Vagina (tissue), 2 donors: ENCODE measurements at regions of chr14 and their contacts with region 1.

Region 1: GRCh38 chr14:74368846-74369245 is 20.6 kb downstream of the VRTN start:
- DNase-seq: no peak
- H3K4me3 ChIP-seq: no peak overlapping the region
- H3K27ac ChIP-seq: no peak overlapping the region
- H3K4me1 ChIP-seq: no peaks in the 10 kb centered on the region
- H3K27me3 ChIP-seq: no peaks in the 10 kb centered on the region
- CTCF ChIP-seq: no peak
- POLR2A ChIP-seq: no peak

Region 2: DNA sequence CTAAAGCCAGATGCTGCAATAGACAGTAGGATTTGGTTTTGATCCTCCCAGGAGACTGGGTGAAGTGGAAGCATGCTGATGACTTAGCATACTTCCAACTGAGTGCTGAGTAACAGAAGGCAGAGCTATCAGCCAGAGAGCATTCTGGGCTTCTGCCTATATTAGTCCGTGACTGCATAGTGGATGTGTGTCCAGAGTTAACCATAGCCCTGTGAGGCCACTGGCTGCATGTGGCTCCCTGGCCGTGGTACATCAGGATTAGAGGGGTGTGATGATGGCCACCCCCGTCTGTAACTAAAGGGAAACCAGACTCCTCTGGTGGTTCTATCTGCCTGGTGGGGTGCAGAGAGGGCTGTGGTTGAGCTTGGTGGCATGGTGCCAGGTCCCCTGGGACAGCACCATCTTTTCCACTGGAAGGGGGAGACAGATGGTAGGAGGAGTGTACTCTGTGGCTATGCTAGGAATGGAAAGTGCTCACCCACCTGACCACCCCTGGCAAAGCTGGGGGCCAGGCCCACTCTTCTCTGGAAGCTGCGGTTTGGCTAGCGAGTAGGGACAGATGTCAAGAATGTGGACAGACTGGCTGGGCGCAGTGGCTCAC is 93.5 kb before region 1 on chr14:
- intact Hi-C with region 1: no loop called
- DNase-seq: no peak
- H3K4me3 ChIP-seq: no peak overlapping the region
- H3K27ac ChIP-seq: no peak overlapping the region
- H3K4me1 ChIP-seq: no peaks in the 10 kb centered on the region
- H3K27me3 ChIP-seq: no peaks in the 10 kb centered on the region
- CTCF ChIP-seq: no peak
- POLR2A ChIP-seq: no peak

Region 3: DNA sequence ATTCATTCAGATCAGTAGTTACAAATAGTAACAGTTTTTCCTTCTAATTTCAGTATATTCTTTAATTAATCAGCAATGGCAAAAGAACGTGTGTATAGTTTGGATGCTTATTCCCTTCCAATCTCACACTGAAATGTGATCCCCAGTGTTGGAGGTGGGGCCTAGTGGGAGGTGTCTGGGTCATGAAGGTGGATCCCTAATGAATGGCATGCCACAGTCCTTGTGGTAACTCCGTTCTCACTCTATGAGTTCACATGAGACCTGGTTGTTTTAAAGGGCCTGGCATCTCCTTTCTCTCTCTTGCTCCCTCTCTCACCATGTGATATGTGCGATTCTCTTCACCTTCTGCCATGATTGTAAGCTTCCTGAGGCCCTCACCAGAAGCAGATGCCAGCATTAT is 76.0 kb after region 1 on chr14:
- intact Hi-C with region 1: no loop called
- DNase-seq: no peak
- H3K4me3 ChIP-seq: no peak overlapping the region
- H3K27ac ChIP-seq: no peak overlapping the region
- H3K4me1 ChIP-seq: no peaks in the 10 kb centered on the region
- H3K27me3 ChIP-seq: no peaks in the 10 kb centered on the region
- CTCF ChIP-seq: no peak
- POLR2A ChIP-seq: no peak

Region 4: GRCh38 chr14:74478996-74479635 is 110.3 kb after region 1 on chr14:
- intact Hi-C with region 1: loop called (anchors 5 kb)
- DNase-seq: no peak
- H3K4me3 ChIP-seq: no peak overlapping the region
- H3K27ac ChIP-seq: no peak overlapping the region
- H3K4me1 ChIP-seq: no peaks in the 10 kb centered on the region
- H3K27me3 ChIP-seq: no peaks in the 10 kb centered on the region
- CTCF ChIP-seq: peak in 1 of 3 experiments; percentile 39
- POLR2A ChIP-seq: no peak

Region 5: GRCh38 chr14:74542056-74542685 is 173.3 kb after region 1 on chr14:
- intact Hi-C with region 1: no loop called
- DNase-seq: no peak
- H3K4me3 ChIP-seq: no peak overlapping the region
- H3K27ac ChIP-seq: no peak overlapping the region
- H3K4me1 ChIP-seq: no peaks in the 10 kb centered on the region
- H3K27me3 ChIP-seq: no peaks in the 10 kb centered on the region
- CTCF ChIP-seq: no peak
- POLR2A ChIP-seq: no peak